CD4-positive, alpha-beta T cell (primary cell): ENCODE measurements at regions of chr13 and their contacts with region 1.

Region 1: DNA sequence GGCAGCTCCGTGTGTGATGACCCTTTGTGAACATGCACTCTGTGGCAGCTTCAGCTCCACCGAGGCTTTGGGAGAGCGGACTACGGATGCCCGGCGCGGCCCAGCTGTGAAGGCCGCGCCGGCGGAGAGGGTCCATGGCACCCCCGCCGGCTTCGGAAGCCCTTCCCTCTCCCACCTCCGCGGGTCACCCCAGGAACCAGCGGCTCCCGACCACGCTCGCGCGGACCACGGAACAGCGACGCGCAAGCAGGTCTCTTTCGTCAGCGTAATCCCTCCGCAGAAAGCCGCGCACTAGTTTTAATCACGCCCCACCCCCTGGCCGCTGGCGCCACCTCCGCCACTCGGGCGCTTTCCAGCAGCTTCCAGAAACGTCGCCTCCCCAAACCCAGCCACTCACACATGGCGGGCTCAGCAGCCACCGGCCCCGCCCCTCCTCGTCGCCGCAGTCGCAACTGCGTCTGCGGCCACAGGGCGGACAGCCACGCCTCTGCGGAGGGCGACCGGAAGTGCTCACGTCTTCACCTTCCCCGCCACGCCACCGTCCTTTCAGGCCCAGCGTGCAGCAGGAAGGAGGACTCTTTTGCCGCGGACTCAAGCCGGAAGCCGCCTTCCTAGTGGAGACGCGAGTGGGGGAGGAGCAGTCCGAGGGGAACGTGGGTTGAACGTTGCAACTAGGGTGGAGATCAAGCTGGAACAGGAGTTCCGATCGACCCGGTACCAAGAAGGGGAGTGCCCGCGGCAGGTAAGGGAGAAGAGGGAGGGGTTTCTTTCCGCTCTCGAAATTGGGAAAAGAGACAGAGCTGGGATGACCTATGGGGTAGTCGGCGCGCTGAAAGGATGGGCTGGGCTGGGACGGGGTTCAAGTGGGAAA is at the start of gene USPL1:
- DNase-seq: peak; percentile 97 to 100 (median 98)
- ATAC-seq: peak; percentile 87
- H3K4me3 ChIP-seq: peak within 1 kb of the TSS; percentile 89
- H3K4me3 Mint-ChIP-seq: no peak within 1 kb of the TSS
- H3K27ac ChIP-seq: peak within 1 kb of the TSS; percentile 95 to 99
- H3K27ac Mint-ChIP-seq: no peak within 1 kb of the TSS
- H3K4me1 ChIP-seq: peaks cover 7% of the 10 kb centered on the region
- H3K4me1 Mint-ChIP-seq: peaks cover 30% of the 10 kb centered on the region
- H3K27me3 ChIP-seq: no peaks in the 10 kb centered on the region
- H3K27me3 Mint-ChIP-seq: no peaks in the 10 kb centered on the region
- CTCF ChIP-seq: no peak
- total RNA-seq, gene USPL1: 41.2 to 42.0 TPM

Region 2: GRCh38 chr13:29935309-29935981 is 682.1 kb before region 1 on chr13:
- CTCF ChIA-PET with region 1: no interaction called
- POLR2A ChIA-PET with region 1: interaction called, 17 read pairs
- intact Hi-C with region 1: no loop called
- DNase-seq: peak; percentile 50 to 93 (median 73)
- ATAC-seq: peak; percentile 92
- H3K4me3 ChIP-seq: peak overlapping the region; percentile 64
- H3K4me3 Mint-ChIP-seq: peak overlapping the region; percentile 90
- H3K27ac ChIP-seq: peak overlapping the region; percentile 73 to 82
- H3K27ac Mint-ChIP-seq: peak overlapping the region; percentile 93
- H3K4me1 ChIP-seq: peaks cover 64% of the 10 kb centered on the region
- H3K4me1 Mint-ChIP-seq: peaks cover 65% of the 10 kb centered on the region
- H3K27me3 ChIP-seq: no peaks in the 10 kb centered on the region
- H3K27me3 Mint-ChIP-seq: no peaks in the 10 kb centered on the region
- CTCF ChIP-seq: no peak

Region 3: GRCh38 chr13:29948244-29948643 is 669.3 kb before region 1 on chr13:
- CTCF ChIA-PET with region 1: no interaction called
- POLR2A ChIA-PET with region 1: no interaction called
- intact Hi-C with region 1: no loop called
- DNase-seq: no peak
- ATAC-seq: no peak
- H3K4me3 ChIP-seq: no peak overlapping the region
- H3K4me3 Mint-ChIP-seq: no peak overlapping the region
- H3K27ac ChIP-seq: no peak overlapping the region
- H3K27ac Mint-ChIP-seq: no peak overlapping the region
- H3K4me1 ChIP-seq: peaks cover 11% of the 10 kb centered on the region
- H3K4me1 Mint-ChIP-seq: peaks cover 23% of the 10 kb centered on the region
- H3K27me3 ChIP-seq: no peaks in the 10 kb centered on the region
- H3K27me3 Mint-ChIP-seq: no peaks in the 10 kb centered on the region
- CTCF ChIP-seq: no peak

Region 4: DNA sequence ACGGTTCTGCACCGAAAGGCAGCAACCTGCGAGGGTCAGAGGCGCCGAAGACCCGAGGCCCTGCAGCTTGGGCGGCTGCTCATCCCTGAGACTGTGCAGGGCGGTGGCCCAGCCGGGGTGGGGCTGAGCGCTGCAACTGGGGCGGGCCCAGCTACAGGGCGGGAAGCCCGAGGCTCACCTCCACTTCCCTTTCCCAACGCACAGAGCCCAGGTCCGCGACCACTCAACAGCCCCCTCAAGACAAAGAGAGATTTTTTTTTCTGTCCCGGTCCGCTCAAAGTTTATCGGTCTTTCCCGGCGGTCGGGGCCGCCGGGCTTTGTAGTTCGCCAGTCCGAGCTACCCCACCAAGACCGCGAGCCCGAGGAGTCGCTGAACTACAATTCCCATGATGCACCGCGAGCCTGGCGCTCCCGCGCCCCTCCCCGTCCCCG is 310.8 kb before region 1 on chr13:
- CTCF ChIA-PET with region 1: no interaction called
- POLR2A ChIA-PET with region 1: interaction called, 17 read pairs
- intact Hi-C with region 1: loop called (anchors 5 kb)
- DNase-seq: peak; percentile 81 to 94 (median 88)
- ATAC-seq: peak; percentile 85
- H3K4me3 ChIP-seq: peak overlapping the region; percentile 86
- H3K4me3 Mint-ChIP-seq: peak overlapping the region; percentile 92
- H3K27ac ChIP-seq: peak overlapping the region; percentile 41 to 47
- H3K27ac Mint-ChIP-seq: peak overlapping the region; percentile 68
- H3K4me1 ChIP-seq: peaks cover 12% of the 10 kb centered on the region
- H3K4me1 Mint-ChIP-seq: peaks cover 12% of the 10 kb centered on the region
- H3K27me3 ChIP-seq: no peaks in the 10 kb centered on the region
- H3K27me3 Mint-ChIP-seq: no peaks in the 10 kb centered on the region
- CTCF ChIP-seq: no peak

Region 5: GRCh38 chr13:30465585-30466357 is 151.8 kb before region 1 on chr13 and contains the start of gene HMGB1:
- CTCF ChIA-PET with region 1: no interaction called
- POLR2A ChIA-PET with region 1: interaction called, 119 read pairs
- intact Hi-C with region 1: loop called (anchors 1 kb)
- DNase-seq: peak; percentile 92 to 98 (median 94)
- ATAC-seq: peak; percentile 86
- H3K4me3 ChIP-seq: peak within 1 kb of the TSS; percentile 69
- H3K4me3 Mint-ChIP-seq: peak within 1 kb of the TSS; percentile 95
- H3K27ac ChIP-seq: peak within 1 kb of the TSS in 1 of 2 donors; percentile 96
- H3K27ac Mint-ChIP-seq: peak within 1 kb of the TSS; percentile 98
- H3K4me1 ChIP-seq: peaks cover 11% of the 10 kb centered on the region
- H3K4me1 Mint-ChIP-seq: peaks cover 37% of the 10 kb centered on the region
- H3K27me3 ChIP-seq: no peaks in the 10 kb centered on the region
- H3K27me3 Mint-ChIP-seq: peaks cover 6% of the 10 kb centered on the region
- CTCF ChIP-seq: no peak
- total RNA-seq, gene HMGB1: 448 to 465 TPM

Region 6: GRCh38 chr13:30593001-30593400 is 24.5 kb before region 1 on chr13:
- CTCF ChIA-PET with region 1: no interaction called
- POLR2A ChIA-PET with region 1: no interaction called
- intact Hi-C with region 1: no loop called
- DNase-seq: no peak
- ATAC-seq: no peak
- H3K4me3 ChIP-seq: no peak overlapping the region
- H3K4me3 Mint-ChIP-seq: no peak overlapping the region
- H3K27ac ChIP-seq: no peak overlapping the region
- H3K27ac Mint-ChIP-seq: no peak overlapping the region
- H3K4me1 ChIP-seq: no peaks in the 10 kb centered on the region
- H3K4me1 Mint-ChIP-seq: no peaks in the 10 kb centered on the region
- H3K27me3 ChIP-seq: no peaks in the 10 kb centered on the region
- H3K27me3 Mint-ChIP-seq: no peaks in the 10 kb centered on the region
- CTCF ChIP-seq: no peak

Region 7: DNA sequence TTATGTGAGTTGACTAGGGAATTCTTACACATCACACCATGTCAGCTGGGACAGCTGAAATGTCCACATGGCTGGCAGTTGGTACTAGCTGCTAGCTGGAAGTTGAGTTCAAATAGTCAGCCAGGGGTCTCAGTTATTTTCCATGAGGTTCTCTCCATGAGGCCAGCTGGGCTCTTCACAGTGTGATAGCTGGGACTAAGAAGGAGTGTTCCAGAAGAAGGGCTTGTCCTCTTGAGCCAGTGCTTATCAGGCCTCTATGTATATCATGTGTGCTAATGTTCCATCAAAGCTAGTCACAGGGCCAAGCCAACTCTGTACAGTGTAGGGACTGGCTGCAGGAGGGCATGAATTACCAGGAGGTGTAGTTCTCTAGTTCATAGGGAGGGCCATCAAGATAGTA is 12.0 kb after region 1 on chr13:
- CTCF ChIA-PET with region 1: interaction called, 3 read pairs
- POLR2A ChIA-PET with region 1: interaction called, 51 read pairs
- intact Hi-C with region 1: no loop called
- DNase-seq: no peak
- ATAC-seq: no peak
- H3K4me3 ChIP-seq: no peak overlapping the region
- H3K4me3 Mint-ChIP-seq: no peak overlapping the region
- H3K27ac ChIP-seq: no peak overlapping the region
- H3K27ac Mint-ChIP-seq: no peak overlapping the region
- H3K4me1 ChIP-seq: peaks cover 14% of the 10 kb centered on the region
- H3K4me1 Mint-ChIP-seq: peaks cover 65% of the 10 kb centered on the region
- H3K27me3 ChIP-seq: no peaks in the 10 kb centered on the region
- H3K27me3 Mint-ChIP-seq: no peaks in the 10 kb centered on the region
- CTCF ChIP-seq: no peak

Region 8: DNA sequence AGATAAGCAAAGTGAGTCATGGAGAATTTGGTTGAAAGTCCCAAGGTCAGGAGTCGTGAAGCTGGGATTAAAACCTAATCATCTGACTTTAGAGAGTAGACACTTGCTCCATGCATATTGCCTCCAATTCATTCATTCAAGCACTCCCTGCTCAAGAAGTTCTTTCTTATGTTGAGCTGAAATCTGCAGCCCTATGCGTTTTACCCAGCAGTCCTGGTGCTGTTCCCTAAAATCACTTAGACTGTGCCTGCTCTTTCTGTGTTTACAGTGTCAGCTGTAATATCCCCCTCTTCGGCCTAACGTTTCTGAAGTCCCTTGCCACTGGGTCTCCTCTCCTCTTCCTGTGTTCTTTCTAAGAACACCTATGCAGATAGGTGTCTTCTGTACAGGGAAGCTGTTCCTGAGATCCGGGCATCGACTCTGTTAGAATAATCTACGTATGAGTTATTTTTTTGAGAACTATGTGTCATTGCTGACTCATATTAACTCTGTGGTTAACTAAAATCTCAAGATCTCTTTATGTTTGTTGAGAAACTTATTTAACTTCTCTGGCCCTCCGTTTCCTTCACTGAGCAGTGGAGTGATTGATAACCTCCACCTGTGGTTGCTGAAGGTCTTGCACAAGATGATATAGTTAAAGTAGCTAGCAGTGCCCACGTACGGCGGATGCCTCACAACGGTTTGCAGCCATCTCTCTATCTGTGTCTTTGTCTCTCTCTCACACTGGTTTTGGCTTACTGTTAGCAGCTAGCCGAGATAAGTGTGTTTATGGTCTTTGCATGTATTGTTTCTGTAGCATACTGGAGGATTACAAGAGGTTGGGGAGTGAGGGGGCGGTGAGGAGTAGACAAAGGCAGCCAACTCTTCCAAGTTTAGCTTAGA is 122.5 kb after region 1 on chr13:
- CTCF ChIA-PET with region 1: no interaction called
- POLR2A ChIA-PET with region 1: interaction called, 24 read pairs
- intact Hi-C with region 1: loop called (anchors 2 to 10 kb)
- DNase-seq: peak; percentile 15 to 81 (median 54)
- ATAC-seq: peak; percentile 55
- H3K4me3 ChIP-seq: peak overlapping the region; percentile 42
- H3K4me3 Mint-ChIP-seq: peak overlapping the region; percentile 83
- H3K27ac ChIP-seq: peak overlapping the region; percentile 31 to 52
- H3K27ac Mint-ChIP-seq: peak overlapping the region; percentile 82
- H3K4me1 ChIP-seq: peaks cover 92% of the 10 kb centered on the region
- H3K4me1 Mint-ChIP-seq: peaks cover 80% of the 10 kb centered on the region
- H3K27me3 ChIP-seq: no peaks in the 10 kb centered on the region
- H3K27me3 Mint-ChIP-seq: no peaks in the 10 kb centered on the region
- CTCF ChIP-seq: no peak

Region 9: DNA sequence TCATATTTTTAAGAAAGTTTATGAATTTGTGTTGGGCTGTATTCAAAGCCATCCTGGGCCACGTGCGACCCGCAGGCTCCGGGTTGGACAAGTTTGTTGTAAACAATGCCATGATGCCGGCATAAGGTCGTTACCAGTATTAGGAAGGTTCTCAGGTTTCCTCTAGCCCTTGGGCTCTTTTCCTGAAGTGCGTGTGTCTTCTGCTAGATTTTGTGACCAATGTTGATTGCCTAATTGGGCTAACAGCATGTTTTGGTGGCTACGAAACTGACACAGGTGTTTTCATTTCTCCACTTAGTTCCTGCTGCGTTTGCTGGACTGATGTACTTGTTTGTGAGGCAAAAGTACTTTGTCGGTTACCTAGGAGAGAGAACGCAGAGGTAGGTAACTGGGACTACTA is 138.1 kb after region 1 on chr13:
- CTCF ChIA-PET with region 1: no interaction called
- POLR2A ChIA-PET with region 1: no interaction called
- intact Hi-C with region 1: no loop called
- DNase-seq: no peak
- ATAC-seq: no peak
- H3K4me3 ChIP-seq: no peak overlapping the region
- H3K4me3 Mint-ChIP-seq: no peak overlapping the region
- H3K27ac ChIP-seq: no peak overlapping the region
- H3K27ac Mint-ChIP-seq: no peak overlapping the region
- H3K4me1 ChIP-seq: peaks cover 3% of the 10 kb centered on the region
- H3K4me1 Mint-ChIP-seq: peaks cover 12% of the 10 kb centered on the region
- H3K27me3 ChIP-seq: no peaks in the 10 kb centered on the region
- H3K27me3 Mint-ChIP-seq: no peaks in the 10 kb centered on the region
- CTCF ChIP-seq: no peak